ENCODE measurements at regions of chr7 and their contacts with region 1.

Region 1: GRCh38 chr7:64907641-64908326 is 4.7 kb downstream of the ZNF273 start:
- DNase-seq: no peak

Region 2: DNA sequence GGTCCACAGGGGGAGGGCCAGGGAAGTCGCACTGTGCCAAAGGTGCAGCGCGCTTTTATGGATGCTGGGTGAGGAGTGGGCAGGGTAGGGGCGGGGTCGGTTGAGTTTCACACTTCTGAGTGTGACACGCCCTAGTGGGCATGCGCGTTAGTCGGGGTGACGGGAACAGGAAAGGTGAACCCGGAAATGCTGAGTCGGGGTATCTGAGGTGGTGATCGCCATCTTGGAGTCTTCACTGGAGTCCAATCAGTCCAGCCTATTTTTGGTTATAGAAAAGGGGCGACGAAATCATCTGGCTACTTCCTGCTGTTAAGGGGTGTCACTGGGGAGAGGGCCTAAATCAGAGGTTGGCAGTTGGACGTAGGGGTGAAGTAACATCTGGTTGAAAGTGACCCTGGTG is 72.8 kb before region 1 on chr7:
- intact Hi-C with region 1: loop called in 1 of 2 experiments (anchors 2 kb)
- DNase-seq: no peak

Measured in posterior vena cava (tissue), 2 donors.